Dendritic cell treated with granulocyte-macrophage colony-stimulating factor and Interleukin-4, amounts not matched to agents 40 ng/mL and 50 ng/mL, for 4 days (primary cell): ENCODE measurements at regions of chr1 and their contacts with region 1.

Region 1: GRCh38 chr1:66446261-66447001 is 87.5 kb upstream of the SGIP1 start:
- H3K4me3 Mint-ChIP-seq: no peak overlapping the region
- H3K27ac Mint-ChIP-seq: no peak overlapping the region
- H3K4me1 Mint-ChIP-seq: peaks cover 23% of the 10 kb centered on the region
- H3K27me3 Mint-ChIP-seq: peaks cover 2% of the 10 kb centered on the region

Region 2: DNA sequence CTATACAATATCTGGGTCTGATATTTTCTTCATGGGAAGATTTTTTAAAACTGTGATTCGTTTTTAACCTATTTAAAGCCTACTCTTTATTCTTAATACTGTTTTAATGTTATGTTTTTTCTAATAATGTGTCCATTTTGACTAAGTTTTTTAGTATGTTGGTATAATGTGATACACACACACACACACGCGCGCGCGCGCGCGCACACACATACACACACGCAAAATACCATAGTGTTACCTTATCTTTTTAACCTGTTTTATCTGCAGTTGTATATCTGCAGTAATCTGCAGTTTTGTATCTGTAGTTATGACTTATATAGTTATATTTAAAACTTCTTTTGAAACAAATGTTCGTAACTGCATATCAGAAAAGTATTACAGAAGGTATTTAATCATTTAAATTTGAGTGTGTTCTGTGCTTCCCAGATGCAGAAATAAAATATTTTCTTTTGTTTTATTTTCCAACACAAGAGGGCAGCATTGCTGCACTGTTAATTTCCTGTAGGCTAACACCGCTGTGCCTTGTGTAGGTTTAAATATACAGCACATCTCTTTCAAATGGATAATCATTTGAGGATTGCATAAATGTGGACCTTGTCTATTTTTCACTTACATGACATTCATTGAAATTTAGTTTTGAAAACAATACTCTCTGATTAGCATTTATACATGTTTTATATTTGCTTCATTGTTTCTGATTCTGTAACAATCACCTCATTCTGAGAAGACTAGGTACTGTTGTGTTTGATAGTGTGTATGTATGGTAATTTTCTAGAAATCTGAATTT is 487.7 kb before region 1 on chr1:
- intact Hi-C with region 1: loop called (anchors 1 kb)
- H3K4me3 Mint-ChIP-seq: no peak overlapping the region
- H3K27ac Mint-ChIP-seq: no peak overlapping the region
- H3K4me1 Mint-ChIP-seq: peaks cover 6% of the 10 kb centered on the region
- H3K27me3 Mint-ChIP-seq: no peaks in the 10 kb centered on the region

Region 3: DNA sequence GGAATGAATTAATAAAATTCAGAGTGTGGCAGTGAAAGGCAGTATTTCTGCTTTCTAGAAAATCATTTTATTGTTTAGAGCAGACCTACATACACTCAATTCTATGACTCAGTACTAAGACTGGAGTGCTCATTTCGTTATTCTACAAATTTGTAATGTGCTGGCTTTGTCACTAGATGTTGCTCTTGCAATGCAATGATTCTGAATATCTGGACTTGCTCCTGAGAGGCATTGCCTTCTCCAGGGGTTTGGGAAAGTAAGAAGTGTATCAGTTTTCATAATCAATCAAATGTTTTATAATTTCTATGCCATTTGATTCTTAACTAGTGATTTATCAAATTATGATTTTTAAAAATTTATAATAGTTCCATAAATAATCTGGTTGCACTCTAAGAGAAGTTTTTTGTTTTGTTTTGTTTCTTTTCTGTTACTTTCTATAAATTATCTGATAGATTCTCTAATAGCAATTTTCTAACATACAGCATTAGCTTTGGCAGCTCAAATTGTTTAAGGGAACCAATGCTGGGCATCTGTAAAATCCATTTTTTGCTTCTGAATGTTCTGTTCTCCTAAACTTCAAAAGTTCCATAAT is 193.0 kb before region 1 on chr1:
- intact Hi-C with region 1: loop called (anchors 1 kb)
- H3K4me3 Mint-ChIP-seq: no peak overlapping the region
- H3K27ac Mint-ChIP-seq: no peak overlapping the region
- H3K4me1 Mint-ChIP-seq: peaks cover 34% of the 10 kb centered on the region
- H3K27me3 Mint-ChIP-seq: no peaks in the 10 kb centered on the region

Region 4: GRCh38 chr1:66725885-66726665 is 279.6 kb after region 1 on chr1:
- intact Hi-C with region 1: loop called (anchors 5 kb)
- H3K4me3 Mint-ChIP-seq: no peak overlapping the region
- H3K27ac Mint-ChIP-seq: no peak overlapping the region
- H3K4me1 Mint-ChIP-seq: peaks cover 8% of the 10 kb centered on the region
- H3K27me3 Mint-ChIP-seq: no peaks in the 10 kb centered on the region

Region 5: GRCh38 chr1:67060811-67061218 is 614.4 kb after region 1 on chr1:
- intact Hi-C with region 1: no loop called
- H3K4me3 Mint-ChIP-seq: no peak overlapping the region
- H3K27ac Mint-ChIP-seq: no peak overlapping the region
- H3K4me1 Mint-ChIP-seq: peaks cover 4% of the 10 kb centered on the region
- H3K27me3 Mint-ChIP-seq: peaks cover 2% of the 10 kb centered on the region